ENCODE measurements at regions of chr12 and their contacts with region 1.

Region 1: DNA sequence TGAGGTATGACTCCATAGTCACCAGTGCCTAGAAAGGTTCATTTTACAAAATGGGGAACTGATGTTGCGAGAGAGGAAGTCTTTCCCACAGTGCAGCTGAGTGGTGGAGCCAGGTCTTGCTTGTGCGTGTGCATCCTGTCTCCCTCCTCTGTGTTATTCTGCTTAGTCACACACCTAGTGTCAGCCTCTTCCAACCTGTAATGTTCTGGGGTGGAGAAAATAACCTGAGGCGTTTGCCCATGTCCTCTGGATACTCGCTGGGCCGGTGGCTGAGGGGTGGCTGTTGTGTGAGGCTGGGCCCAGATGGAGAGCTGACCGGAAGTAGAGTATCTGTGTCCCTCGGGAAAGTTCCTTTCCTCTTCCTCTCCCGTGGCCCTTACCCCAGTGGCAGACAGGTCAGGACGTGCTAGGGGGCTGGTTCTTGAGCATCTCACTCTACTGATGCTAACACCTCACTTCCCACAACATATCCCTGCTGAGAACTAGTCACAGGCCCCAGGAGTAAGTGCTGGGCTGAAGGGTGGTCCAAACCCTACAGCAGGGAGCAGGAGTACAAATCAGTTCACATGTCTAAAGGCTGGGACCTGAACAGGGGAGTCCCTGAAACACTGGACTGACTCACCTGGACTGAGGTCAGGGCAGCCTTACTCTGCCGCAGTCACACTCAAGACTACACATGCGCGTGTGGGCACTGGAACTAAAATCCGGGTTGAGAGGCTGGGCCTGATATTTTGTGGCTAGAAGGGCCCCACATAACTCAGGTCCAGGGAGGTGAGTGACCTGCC is 7.0 kb downstream of the MLF2 start:
- DNase-seq: peak in 1 of 4 donors; percentile 29
- ATAC-seq: no peak
- H3K4me3 ChIP-seq: no peak overlapping the region
- H3K27ac ChIP-seq: peak overlapping the region in 2 of 4 donors; percentile 37 to 46
- H3K4me1 ChIP-seq: peaks cover 4% of the 10 kb centered on the region
- H3K27me3 ChIP-seq: no peaks in the 10 kb centered on the region
- CTCF ChIP-seq: no peak
- POLR2A ChIP-seq: no peak

Region 2: GRCh38 chr12:6839482-6840201 is 93.7 kb after region 1 on chr12:
- intact Hi-C with region 1: loop called (anchors 5 kb)
- DNase-seq: no peak
- ATAC-seq: no peak
- H3K4me3 ChIP-seq: no peak overlapping the region
- H3K27ac ChIP-seq: no peak overlapping the region
- H3K4me1 ChIP-seq: no peaks in the 10 kb centered on the region
- H3K27me3 ChIP-seq: no peaks in the 10 kb centered on the region
- CTCF ChIP-seq: no peak
- POLR2A ChIP-seq: no peak